Aorta (tissue), 5 donors: ENCODE measurements at regions of chr21 and their contacts with region 1.

Region 1: DNA sequence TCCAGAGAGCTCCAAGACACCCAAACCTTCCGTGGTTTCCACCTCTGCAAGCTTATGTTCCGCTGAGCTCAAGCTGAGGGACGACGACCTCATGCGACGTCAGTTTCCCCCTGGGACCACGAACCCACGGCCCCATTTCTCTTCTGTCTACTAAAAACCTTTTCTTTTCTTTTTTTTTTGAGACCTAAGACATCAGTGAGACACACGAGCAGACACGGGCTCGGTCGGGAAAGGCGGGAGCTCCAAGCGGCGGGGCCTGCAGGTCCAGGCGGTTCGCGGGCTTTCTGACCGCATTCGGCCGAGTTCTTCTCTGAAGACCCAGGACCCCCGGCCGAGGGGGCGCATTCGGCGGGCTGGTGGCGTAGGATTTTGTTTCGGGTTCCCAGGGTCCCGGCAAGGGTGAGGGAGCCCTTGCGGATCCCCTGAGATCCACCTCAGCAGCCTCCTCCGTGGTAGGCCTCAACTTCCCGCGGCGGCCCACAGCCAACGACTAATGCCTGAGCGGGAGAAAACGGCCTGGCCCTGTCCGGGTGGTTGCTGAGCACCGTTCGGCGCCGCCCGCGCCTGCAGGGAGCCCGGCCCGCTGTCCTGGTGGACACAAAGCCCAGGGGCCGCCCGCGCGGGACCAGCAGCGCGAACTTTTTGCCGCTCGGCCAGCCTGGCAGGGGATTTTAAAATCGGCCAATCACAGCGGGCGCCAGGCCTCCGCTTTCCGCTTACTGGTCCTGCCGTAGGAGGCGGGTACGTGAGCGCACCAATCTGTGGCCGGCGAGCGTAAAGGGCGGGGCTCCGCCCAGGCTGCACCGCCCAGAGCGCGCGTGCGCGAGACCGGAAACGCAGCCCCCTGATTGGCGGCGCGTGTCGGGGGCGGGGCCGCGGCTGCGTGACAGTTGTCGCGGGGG is at the start of gene C21orf58:
- DNase-seq: peak; percentile 99
- ATAC-seq: peak; percentile 98
- H3K4me3 ChIP-seq: peak within 1 kb of the TSS; percentile 80 to 95
- H3K27ac ChIP-seq: peak within 1 kb of the TSS in 1 of 2 donors; percentile 87
- H3K4me1 ChIP-seq: no peaks in the 10 kb centered on the region
- H3K27me3 ChIP-seq: no peaks in the 10 kb centered on the region
- total RNA-seq, gene C21orf58: 0.81 to 3.7 TPM

Region 2: DNA sequence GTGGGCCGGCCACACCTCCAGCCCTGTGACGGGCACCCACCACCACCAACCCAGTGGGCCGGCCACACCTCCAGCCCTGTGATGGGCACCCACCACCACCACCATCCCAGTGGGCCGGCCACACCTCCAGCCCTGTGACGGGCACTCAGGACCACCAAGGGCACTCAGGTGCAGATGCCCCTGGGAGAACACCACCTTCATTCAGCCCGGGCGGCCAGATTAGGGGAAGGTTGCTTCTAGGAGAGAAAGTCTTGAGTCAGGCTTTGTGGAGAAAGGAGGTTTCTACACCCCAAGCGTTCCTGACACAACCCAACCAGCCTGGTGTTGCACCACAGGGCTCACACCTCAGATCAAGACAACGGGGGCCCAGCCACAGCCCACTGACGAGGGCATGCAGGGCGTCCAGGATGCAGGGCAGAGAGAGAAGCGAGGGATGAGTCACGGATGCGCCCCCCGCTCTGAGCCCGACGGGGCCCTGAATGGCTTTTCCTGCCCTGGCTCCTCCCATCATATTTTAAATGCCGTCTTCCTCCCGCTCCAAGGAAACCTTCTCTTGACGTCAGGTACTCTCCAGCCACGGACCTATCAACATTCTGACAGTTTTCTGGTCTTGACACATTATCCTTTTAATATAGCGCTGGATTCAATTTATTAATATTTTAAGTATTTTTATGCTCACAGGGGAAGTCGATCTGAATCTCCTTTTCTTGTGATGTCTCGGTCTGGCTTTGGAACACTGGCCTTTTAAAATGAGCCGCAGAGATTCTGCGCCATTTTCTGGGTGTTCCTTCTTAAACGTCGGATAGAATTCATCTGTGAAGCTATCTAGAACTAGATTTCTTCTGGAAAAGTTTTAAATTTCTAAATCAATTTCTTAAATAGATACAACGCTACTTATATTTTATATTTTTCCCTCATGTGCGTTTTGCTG is 138.6 kb before region 1 on chr21:
- intact Hi-C with region 1: loop called in 1 of 2 experiments (anchors 5 kb)
- DNase-seq: peak; percentile 91 to 93
- ATAC-seq: peak; percentile 69
- H3K4me3 ChIP-seq: peak overlapping the region in 1 of 2 donors; percentile 37
- H3K27ac ChIP-seq: no peak overlapping the region
- H3K4me1 ChIP-seq: no peaks in the 10 kb centered on the region
- H3K27me3 ChIP-seq: no peaks in the 10 kb centered on the region

Region 3: GRCh38 chr21:46228345-46229051 is 95.0 kb before region 1 on chr21 and contains the start of gene LSS:
- intact Hi-C with region 1: loop called in 1 of 2 experiments (anchors 5 kb)
- DNase-seq: peak; percentile 99 to 100
- ATAC-seq: peak; percentile 96
- H3K4me3 ChIP-seq: peak within 1 kb of the TSS; percentile 69 to 95
- H3K27ac ChIP-seq: peak within 1 kb of the TSS; percentile 20 to 76
- H3K4me1 ChIP-seq: peaks cover 0 to 3% of the 10 kb centered on the region in 2 donors
- H3K27me3 ChIP-seq: no peaks in the 10 kb centered on the region
- total RNA-seq, gene LSS: 60.2 to 85.2 TPM

Region 4: DNA sequence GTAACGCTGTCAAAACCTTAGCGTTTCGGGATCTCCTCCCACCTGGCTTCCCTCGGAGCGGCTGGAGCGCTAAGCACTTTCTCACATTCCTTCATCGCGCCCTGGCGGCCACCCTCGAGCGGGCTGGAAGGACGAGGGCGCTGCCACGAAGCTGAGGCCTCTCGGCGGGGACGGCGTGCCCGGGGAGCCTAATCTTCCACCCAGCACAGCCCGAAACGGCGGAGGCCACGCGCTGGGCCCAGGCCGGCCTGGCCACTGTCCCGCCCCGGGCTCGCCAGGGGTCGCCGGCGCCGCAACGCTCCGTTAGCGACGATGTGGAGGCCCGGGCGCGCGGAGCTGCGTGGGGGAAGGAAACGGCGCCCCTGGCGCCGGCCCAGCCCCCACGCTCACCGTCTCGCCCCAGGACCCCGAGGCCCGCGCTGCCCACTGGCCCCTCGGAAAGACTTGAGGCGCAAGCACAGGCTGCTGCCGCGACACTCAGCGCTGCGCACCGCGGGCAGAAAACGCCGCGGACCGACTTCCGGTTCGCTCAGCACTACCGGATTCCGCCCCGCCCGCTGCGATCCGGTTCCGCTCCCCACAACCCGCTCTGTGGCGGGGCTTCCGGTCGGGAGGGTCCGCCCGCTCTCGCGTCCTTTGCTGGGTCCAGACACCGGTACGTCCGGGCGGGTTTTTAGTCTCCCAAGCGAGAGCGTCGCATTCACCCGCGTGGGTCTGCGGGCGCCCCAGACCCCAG is 37.5 kb before region 1 on chr21 and contains the start of gene YBEY:
- intact Hi-C with region 1: loop called (anchors 2 to 5 kb)
- DNase-seq: peak; percentile 94 to 96
- ATAC-seq: peak; percentile 97
- H3K4me3 ChIP-seq: peak within 1 kb of the TSS; percentile 63 to 92
- H3K27ac ChIP-seq: peak within 1 kb of the TSS in 1 of 2 donors; percentile 93
- H3K4me1 ChIP-seq: peaks cover 0 to 7% of the 10 kb centered on the region in 2 donors
- H3K27me3 ChIP-seq: no peaks in the 10 kb centered on the region
- total RNA-seq, gene YBEY: 7.7 to 11.3 TPM